OCI-LY7 (cell line): ENCODE measurements at regions of chr7 and their contacts with region 1.

Region 1: GRCh38 chr7:144786522-144786921 is 49.3 kb downstream of the TPK1 start:
- DNase-seq: peak; percentile 23
- H3K4me3 ChIP-seq: no peak overlapping the region
- H3K27ac ChIP-seq: no peak overlapping the region
- H3K4me1 ChIP-seq: no peaks in the 10 kb centered on the region
- CTCF ChIP-seq: peak; percentile 72

Region 2: GRCh38 chr7:144738708-144739314 is 47.7 kb before region 1 on chr7:
- CTCF ChIA-PET with region 1: no interaction called
- POLR2A ChIA-PET with region 1: no interaction called
- intact Hi-C with region 1: loop called (anchors 5 kb)
- DNase-seq: peak; percentile 60
- H3K4me3 ChIP-seq: no peak overlapping the region
- H3K27ac ChIP-seq: no peak overlapping the region
- H3K4me1 ChIP-seq: no peaks in the 10 kb centered on the region
- CTCF ChIP-seq: peak; percentile 94

Region 3: DNA sequence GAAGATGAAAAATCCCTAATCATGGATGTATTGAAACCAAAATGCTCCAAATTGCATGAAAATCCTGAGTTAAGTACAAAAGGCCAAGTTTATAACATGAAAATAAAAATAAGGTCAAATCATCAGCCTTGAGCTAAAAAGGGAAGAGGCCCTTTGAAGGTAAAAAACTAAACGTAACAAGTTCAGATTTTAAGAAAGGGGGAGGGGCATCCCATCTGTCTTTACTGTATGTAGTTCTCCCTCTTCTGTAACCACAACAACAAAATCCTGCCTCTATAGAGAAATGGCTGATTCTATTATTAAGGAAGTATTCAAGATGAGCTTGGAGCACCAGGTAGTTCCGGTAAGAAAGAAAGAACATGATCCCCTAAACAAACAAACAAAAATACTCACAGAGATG is 15.3 kb before region 1 on chr7:
- CTCF ChIA-PET with region 1: no interaction called
- POLR2A ChIA-PET with region 1: no interaction called
- intact Hi-C with region 1: no loop called
- DNase-seq: no peak
- H3K4me3 ChIP-seq: no peak overlapping the region
- H3K27ac ChIP-seq: no peak overlapping the region
- H3K4me1 ChIP-seq: no peaks in the 10 kb centered on the region
- CTCF ChIP-seq: no peak

Region 4: GRCh38 chr7:144854839-144855424 is 68.4 kb after region 1 on chr7:
- CTCF ChIA-PET with region 1: no interaction called
- POLR2A ChIA-PET with region 1: no interaction called
- intact Hi-C with region 1: no loop called
- DNase-seq: peak; percentile 22
- H3K4me3 ChIP-seq: no peak overlapping the region
- H3K27ac ChIP-seq: no peak overlapping the region
- H3K4me1 ChIP-seq: no peaks in the 10 kb centered on the region
- CTCF ChIP-seq: peak; percentile 80

Region 5: DNA sequence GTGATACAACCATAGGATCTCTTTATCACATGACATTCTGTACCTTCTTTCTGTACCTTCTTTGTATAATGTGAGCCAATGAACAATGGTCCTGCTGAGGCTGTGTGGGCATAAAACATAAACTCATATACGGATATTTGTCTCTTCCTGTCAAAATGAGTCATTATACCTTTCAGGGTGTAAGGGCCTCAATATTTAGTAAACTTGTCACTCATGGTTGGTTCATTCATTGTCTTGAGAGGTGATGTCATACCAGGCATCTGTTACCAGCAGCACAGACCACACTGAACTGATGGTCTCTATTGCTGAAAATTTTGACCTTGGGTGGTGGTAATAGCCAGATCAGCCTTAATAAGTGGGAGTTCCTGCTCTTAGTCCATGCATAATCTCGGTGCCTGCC is 337.0 kb after region 1 on chr7:
- CTCF ChIA-PET with region 1: no interaction called
- POLR2A ChIA-PET with region 1: no interaction called
- intact Hi-C with region 1: no loop called
- DNase-seq: no peak
- H3K4me3 ChIP-seq: no peak overlapping the region
- H3K27ac ChIP-seq: no peak overlapping the region
- H3K4me1 ChIP-seq: no peaks in the 10 kb centered on the region
- CTCF ChIP-seq: no peak

Region 6: GRCh38 chr7:146296028-146296427 is 1509.5 kb after region 1 on chr7:
- CTCF ChIA-PET with region 1: no interaction called
- POLR2A ChIA-PET with region 1: no interaction called
- intact Hi-C with region 1: no loop called
- DNase-seq: no peak
- H3K4me3 ChIP-seq: no peak overlapping the region
- H3K27ac ChIP-seq: no peak overlapping the region
- H3K4me1 ChIP-seq: no peaks in the 10 kb centered on the region
- CTCF ChIP-seq: no peak